Spleen (tissue), 13 donors: ENCODE measurements at regions of chr15 and their contacts with region 1.

Region 1: GRCh38 chr15:89760303-89761008 is 9.4 kb upstream of the MESP1 start:
- DNase-seq: peak; percentile 94
- H3K4me3 ChIP-seq: no peak overlapping the region
- H3K27ac ChIP-seq: peak overlapping the region in 1 of 8 donors; percentile 0
- H3K4me1 ChIP-seq: peaks cover 0 to 13% (median 0%) of the 10 kb centered on the region in 6 donors
- H3K27me3 ChIP-seq: peaks cover 0 to 24% (median 0%) of the 10 kb centered on the region in 7 donors
- CTCF ChIP-seq: peak; percentile 62 to 97 (median 92)
- POLR2A ChIP-seq: no peak

Region 2: DNA sequence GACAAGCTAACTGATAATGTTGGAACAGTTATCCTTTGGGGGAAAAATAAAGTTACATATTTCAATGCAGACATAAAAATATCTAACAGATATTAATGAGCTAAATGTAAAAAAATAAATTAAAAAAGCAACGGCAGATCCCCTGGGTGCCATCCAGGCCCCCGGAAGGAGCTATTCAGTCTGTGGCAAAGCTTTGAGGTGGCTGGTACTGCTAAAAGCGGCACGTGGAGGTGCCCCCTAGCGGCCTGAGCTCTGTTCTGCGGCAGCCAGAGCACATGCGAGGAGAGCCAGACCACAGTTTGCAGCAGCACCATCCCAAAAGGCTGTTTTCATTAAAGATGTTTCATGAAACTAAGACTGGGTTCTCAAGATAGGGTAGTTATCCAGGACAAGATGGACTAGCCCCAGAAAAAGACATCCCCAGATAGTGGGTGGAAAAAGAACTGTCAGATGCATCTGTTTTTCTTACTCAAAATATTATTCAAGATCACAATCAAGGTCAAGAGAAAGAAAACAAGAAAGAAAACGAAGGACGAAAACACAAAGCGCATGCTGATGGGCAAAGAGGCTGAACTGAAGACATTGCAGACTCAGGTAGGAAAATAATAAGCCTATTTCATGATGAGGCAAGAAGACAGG is 114.6 kb after region 1 on chr15:
- intact Hi-C with region 1: loop called (anchors 5 kb)
- DNase-seq: peak; percentile 95
- H3K4me3 ChIP-seq: no peak overlapping the region
- H3K27ac ChIP-seq: peak overlapping the region in 4 of 8 donors; percentile 81 to 91 (median 86)
- H3K4me1 ChIP-seq: peaks cover 0 to 43% (median 12%) of the 10 kb centered on the region in 6 donors
- H3K27me3 ChIP-seq: no peaks in the 10 kb centered on the region
- CTCF ChIP-seq: peak; percentile 67 to 96 (median 92)
- POLR2A ChIP-seq: no peak

Region 3: DNA sequence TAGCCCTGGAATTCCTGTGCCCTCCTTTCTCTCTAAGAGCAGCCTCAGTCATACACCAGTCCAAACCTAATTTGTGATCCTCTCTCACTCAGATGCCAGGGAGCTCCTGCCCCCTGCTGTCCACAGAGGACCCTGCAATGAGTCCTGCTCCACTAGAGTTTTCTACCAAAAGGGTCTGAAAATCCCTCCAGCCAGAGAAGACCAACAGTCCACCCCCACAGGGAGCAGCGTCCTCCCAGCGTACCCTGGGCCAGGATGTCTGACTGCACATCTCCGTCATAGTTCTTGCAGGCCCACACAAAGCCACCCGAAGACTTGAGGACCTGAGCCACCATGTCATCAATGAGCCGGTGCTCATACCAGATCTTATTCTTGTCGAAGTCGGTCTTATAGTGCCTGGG is 326.4 kb after region 1 on chr15:
- intact Hi-C with region 1: loop called (anchors 10 kb)
- DNase-seq: peak; percentile 83
- H3K4me3 ChIP-seq: no peak overlapping the region
- H3K27ac ChIP-seq: no peak overlapping the region
- H3K4me1 ChIP-seq: peaks cover 0 to 48% (median 7%) of the 10 kb centered on the region in 6 donors
- H3K27me3 ChIP-seq: no peaks in the 10 kb centered on the region
- CTCF ChIP-seq: peak; percentile 55 to 85 (median 75)
- POLR2A ChIP-seq: no peak